Activated naive CD4-positive, alpha-beta T cell treated with anti-CD3 and anti-CD28 coated beads for 36 hours (primary cell): ENCODE measurements at regions of chr10 and their contacts with region 1.

Region 1: GRCh38 chr10:28334296-28334695 is 31.4 kb upstream of the MPP7 start:
- DNase-seq: peak; percentile 61
- H3K4me3 Mint-ChIP-seq: peak overlapping the region; percentile 67
- H3K27ac Mint-ChIP-seq: peak overlapping the region; percentile 96
- H3K4me1 Mint-ChIP-seq: peaks cover 76% of the 10 kb centered on the region
- H3K27me3 Mint-ChIP-seq: no peaks in the 10 kb centered on the region

Region 2: GRCh38 chr10:26437637-26438461 is 1896.4 kb before region 1 on chr10 and contains the start of gene APBB1IP:
- CTCF ChIA-PET with region 1: no interaction called
- intact Hi-C with region 1: loop called (anchors 2 kb)
- DNase-seq: peak; percentile 58
- H3K4me3 Mint-ChIP-seq: peak within 1 kb of the TSS; percentile 81
- H3K27ac Mint-ChIP-seq: peak within 1 kb of the TSS; percentile 98
- H3K4me1 Mint-ChIP-seq: peaks cover 50% of the 10 kb centered on the region
- H3K27me3 Mint-ChIP-seq: no peaks in the 10 kb centered on the region
- total RNA-seq, gene APBB1IP: 29.4 to 30.9 TPM

Region 3: DNA sequence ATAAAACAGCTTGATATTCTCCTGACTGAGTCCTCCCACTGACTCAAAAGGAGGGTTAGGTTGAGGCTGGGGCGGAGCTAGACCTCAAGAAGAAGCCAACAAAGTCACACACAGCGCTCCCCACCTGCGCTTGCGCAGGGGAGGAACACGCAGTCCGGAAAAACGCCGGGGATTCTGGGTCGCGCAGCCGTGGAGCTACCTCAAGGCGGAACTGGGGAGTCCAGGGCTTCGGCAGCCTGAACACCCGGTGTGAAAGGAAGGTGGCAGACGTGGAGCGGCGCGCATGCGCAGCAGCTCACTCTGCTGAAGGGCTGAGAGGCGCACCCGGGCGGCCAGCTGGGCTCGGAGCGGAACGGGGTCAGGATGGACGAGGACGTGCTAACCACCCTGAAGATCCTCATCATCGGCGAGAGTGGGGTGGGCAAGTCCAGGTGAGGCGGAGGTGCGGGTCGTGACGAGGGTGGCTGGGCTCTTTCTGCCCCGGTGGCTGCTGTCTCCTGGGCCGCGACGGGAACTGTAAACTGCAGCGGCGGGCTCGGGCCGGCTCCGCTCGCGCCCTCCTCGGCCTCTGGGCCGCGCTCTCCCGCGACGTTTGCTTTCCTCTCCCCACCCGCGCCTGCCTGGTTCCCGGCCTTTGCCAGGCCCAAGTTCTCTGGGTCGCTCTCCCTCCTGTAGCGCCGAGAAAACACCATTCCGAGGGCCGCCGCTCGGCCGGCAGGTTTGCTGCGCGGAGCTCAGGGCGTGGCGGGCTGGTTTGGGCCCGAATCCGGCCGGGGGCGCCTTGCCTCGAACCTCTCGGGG is 830.1 kb before region 1 on chr10 and contains the start of gene RAB18:
- CTCF ChIA-PET with region 1: no interaction called
- intact Hi-C with region 1: loop called (anchors 1 kb)
- DNase-seq: peak; percentile 99
- H3K4me3 Mint-ChIP-seq: peak within 1 kb of the TSS; percentile 99
- H3K27ac Mint-ChIP-seq: peak within 1 kb of the TSS; percentile 92
- H3K4me1 Mint-ChIP-seq: peaks cover 41% of the 10 kb centered on the region
- H3K27me3 Mint-ChIP-seq: no peaks in the 10 kb centered on the region
- total RNA-seq, gene RAB18: 35.4 to 41.3 TPM

Region 4: GRCh38 chr10:28291881-28292297 is 42.4 kb before region 1 on chr10:
- CTCF ChIA-PET with region 1: interaction called, 3 read pairs
- intact Hi-C with region 1: loop called (anchors 1 kb)
- DNase-seq: peak; percentile 84
- H3K4me3 Mint-ChIP-seq: no peak overlapping the region
- H3K27ac Mint-ChIP-seq: peak overlapping the region; percentile 89
- H3K4me1 Mint-ChIP-seq: peaks cover 73% of the 10 kb centered on the region
- H3K27me3 Mint-ChIP-seq: no peaks in the 10 kb centered on the region

Region 5: GRCh38 chr10:28367929-28368484 is 33.7 kb after region 1 on chr10:
- CTCF ChIA-PET with region 1: interaction called, 36 read pairs
- intact Hi-C with region 1: loop called (anchors 1 kb)
- DNase-seq: peak; percentile 78
- H3K4me3 Mint-ChIP-seq: peak overlapping the region; percentile 49
- H3K27ac Mint-ChIP-seq: peak overlapping the region; percentile 91
- H3K4me1 Mint-ChIP-seq: peaks cover 44% of the 10 kb centered on the region
- H3K27me3 Mint-ChIP-seq: no peaks in the 10 kb centered on the region

Region 6: DNA sequence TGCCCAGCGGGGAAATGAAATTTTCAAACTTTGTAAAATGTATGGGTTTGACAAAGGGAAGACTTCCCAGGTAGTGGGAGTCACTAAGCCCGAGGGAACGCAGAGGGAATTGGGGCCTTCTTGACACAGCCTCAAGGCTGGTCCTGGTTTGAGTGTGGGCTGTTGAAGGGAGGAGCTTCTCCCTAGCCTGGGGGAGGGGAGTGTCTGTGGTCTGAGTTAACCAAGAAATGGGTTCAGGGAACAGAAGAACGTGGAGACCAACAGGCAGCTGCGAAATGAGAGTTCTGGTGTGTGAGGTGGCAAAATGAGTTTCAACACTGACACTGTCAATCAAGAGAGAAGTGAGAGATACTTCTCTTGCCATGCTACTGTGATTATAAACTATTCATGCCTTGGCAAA is 310.4 kb after region 1 on chr10:
- CTCF ChIA-PET with region 1: no interaction called
- intact Hi-C with region 1: no loop called
- DNase-seq: no peak
- H3K4me3 Mint-ChIP-seq: no peak overlapping the region
- H3K27ac Mint-ChIP-seq: no peak overlapping the region
- H3K4me1 Mint-ChIP-seq: no peaks in the 10 kb centered on the region
- H3K27me3 Mint-ChIP-seq: no peaks in the 10 kb centered on the region

Region 7: DNA sequence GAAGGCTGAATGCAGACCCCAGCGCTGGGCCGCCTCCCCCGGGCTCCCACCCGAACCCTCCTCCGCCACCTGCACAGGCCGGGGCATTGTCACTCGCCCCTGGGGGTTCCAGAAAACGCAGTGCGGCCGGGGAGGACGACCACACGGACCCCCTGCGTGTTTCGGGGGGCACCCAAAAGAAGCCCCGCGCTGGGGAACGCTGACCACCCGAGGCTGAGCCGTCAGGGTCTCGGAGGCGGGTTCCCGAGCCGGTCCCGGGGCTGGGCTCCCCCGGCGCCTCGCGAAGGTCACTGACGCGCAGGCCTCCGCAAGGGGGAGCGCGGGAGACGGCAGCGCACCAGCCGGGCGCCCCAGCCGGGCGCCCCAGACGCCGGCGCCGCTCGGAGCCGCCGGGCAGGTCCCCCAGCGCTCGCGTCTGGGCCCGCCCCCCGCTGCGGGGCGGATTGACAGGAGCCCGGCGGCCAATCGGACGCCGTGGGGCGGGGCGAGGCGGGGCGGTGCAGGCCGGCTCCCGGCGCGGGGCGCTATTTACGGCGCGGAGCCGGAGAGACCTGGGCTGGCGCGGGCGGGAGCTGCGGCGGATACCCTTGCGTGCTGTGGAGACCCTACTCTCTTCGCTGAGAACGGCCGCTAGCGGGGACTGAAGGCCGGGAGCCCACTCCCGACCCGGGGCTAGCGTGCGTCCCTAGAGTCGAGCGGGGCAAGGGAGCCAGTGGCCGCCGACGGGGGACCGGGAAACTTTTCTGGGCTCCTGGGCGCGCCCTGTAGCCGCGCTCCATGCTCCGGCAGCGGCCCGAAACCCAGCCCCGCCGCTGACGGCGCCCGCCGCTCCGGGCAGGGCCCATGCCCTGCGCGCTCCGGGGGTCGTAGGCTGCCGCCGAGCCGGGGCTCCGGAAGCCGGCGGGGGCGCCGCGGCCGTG is 342.9 kb after region 1 on chr10 and contains the start of gene BAMBI:
- CTCF ChIA-PET with region 1: no interaction called
- intact Hi-C with region 1: loop called (anchors 10 kb)
- DNase-seq: peak; percentile 91
- H3K4me3 Mint-ChIP-seq: peak within 1 kb of the TSS; percentile 73
- H3K27ac Mint-ChIP-seq: no peak within 1 kb of the TSS
- H3K4me1 Mint-ChIP-seq: peaks cover 23% of the 10 kb centered on the region
- H3K27me3 Mint-ChIP-seq: peaks cover 53% of the 10 kb centered on the region
- total RNA-seq, gene BAMBI: 0.57 to 0.59 TPM